ENCODE measurements at regions of chr11 and their contacts with region 1.

Region 1: GRCh38 chr11:123407130-123407995 is 22.7 kb upstream of the GRAMD1B start:
- H3K4me3 ChIP-seq: no peak overlapping the region
- H3K27ac ChIP-seq: no peak overlapping the region
- H3K4me1 ChIP-seq: 0 out of 2 replicates have a peak, but pooled peaks cover 5% of the 10 kb centered on the region
- CTCF ChIP-seq: peak; percentile 33; the same call in 1 of the 2 replicates

Region 2: GRCh38 chr11:123308077-123308476 is 99.3 kb before region 1 on chr11:
- CTCF ChIA-PET with region 1: interaction called, 13 read pairs
- POLR2A ChIA-PET with region 1: no interaction called
- H3K4me3 ChIP-seq: no peak overlapping the region
- H3K27ac ChIP-seq: no peak overlapping the region
- H3K4me1 ChIP-seq: no peaks in the 10 kb centered on the region
- CTCF ChIP-seq: no peak

Region 3: DNA sequence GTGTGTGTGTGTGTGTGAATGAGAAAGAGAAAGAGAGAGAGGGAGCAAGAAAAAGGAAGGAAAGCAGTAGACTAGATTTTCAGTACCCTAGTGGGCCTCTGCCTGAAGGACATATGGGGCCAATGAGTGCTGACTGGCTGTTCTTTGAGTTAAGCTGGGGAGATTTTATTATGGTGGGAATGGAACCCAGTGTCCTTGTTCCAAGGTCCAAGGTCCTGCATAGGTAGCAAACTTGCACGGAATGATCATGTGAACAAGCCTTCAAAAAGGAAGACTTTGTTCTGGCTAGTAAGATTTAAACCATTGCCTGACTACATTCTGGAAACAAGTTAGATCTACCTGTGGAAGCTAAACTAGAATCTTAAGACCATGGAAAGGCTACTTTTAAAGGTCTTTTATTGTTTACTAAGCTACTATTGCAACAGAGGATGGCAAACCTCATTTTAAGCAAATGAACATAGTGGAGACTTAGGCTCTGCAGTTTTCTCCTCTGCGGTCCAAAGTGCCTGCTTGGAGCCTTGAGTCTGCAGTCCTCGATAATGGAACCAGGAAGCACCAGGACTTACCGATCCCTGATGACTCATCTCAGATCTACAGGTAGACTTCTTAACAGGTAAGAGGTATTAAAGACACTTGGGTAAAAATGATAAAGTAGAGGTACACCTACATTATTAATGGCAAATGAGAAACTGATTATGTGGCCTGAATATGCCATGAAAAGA is 12.5 kb after region 1 on chr11:
- CTCF ChIA-PET with region 1: interaction called, 28 read pairs
- POLR2A ChIA-PET with region 1: no interaction called
- H3K4me3 ChIP-seq: no peak overlapping the region
- H3K27ac ChIP-seq: no peak overlapping the region
- H3K4me1 ChIP-seq: no peaks in the 10 kb centered on the region
- CTCF ChIP-seq: no peak

Region 4: GRCh38 chr11:123438191-123438627 is 30.8 kb after region 1 on chr11:
- CTCF ChIA-PET with region 1: interaction called, 14 read pairs
- POLR2A ChIA-PET with region 1: no interaction called
- H3K4me3 ChIP-seq: no peak overlapping the region
- H3K27ac ChIP-seq: no peak overlapping the region
- H3K4me1 ChIP-seq: no peaks in the 10 kb centered on the region; the same call in 1 of the 2 replicates
- CTCF ChIP-seq: no peak

Region 5: GRCh38 chr11:123478352-123478987 is 71.1 kb after region 1 on chr11:
- CTCF ChIA-PET with region 1: interaction called, 209 read pairs
- POLR2A ChIA-PET with region 1: interaction called, 3 read pairs
- H3K4me3 ChIP-seq: no peak overlapping the region
- H3K27ac ChIP-seq: no peak overlapping the region
- H3K4me1 ChIP-seq: no peaks in the 10 kb centered on the region
- CTCF ChIP-seq: peak; percentile 30; the same call in 1 of the 2 replicates

Region 6: GRCh38 chr11:123580557-123581275 is 173.4 kb after region 1 on chr11:
- CTCF ChIA-PET with region 1: interaction called, 11 read pairs
- POLR2A ChIA-PET with region 1: no interaction called
- H3K4me3 ChIP-seq: no peak overlapping the region
- H3K27ac ChIP-seq: no peak overlapping the region
- H3K4me1 ChIP-seq: no peaks in the 10 kb centered on the region
- CTCF ChIP-seq: peak; percentile 96